ENCODE measurements at regions of chr1 and their contacts with region 1.

Region 1: GRCh38 chr1:206808615-206809014 is 36.3 kb upstream of the IL10 start:
- DNase-seq: no peak
- H3K4me3 ChIP-seq: no peak overlapping the region
- H3K27ac ChIP-seq: no peak overlapping the region
- H3K4me1 ChIP-seq: peaks cover 0 to 22% of the 10 kb centered on the region in 2 experiments; a peak in 2 of 4 replicates
- H3K27me3 ChIP-seq: peaks cover 9% of the 10 kb centered on the region; the same call in 1 of the 2 replicates
- CTCF ChIP-seq: peak; percentile 33; the same call in 1 of the 2 replicates
- EP300 ChIP-seq: no peak
- RAD21 ChIP-seq: peak; percentile 56

Region 2: GRCh38 chr1:206797534-206798383 is 10.9 kb before region 1 on chr1:
- CTCF ChIA-PET with region 1: interaction called, 10 read pairs
- POLR2A ChIA-PET with region 1: no interaction called
- DNase-seq: peak; percentile 27
- H3K4me3 ChIP-seq: no peak overlapping the region
- H3K27ac ChIP-seq: no peak overlapping the region
- H3K4me1 ChIP-seq: no peaks in the 10 kb centered on the region
- H3K27me3 ChIP-seq: 0 out of 2 replicates have a peak, but pooled peaks cover 8% of the 10 kb centered on the region
- CTCF ChIP-seq: peak; percentile 59
- EP300 ChIP-seq: no peak
- RAD21 ChIP-seq: peak; percentile 40; the same call in 1 of the 2 replicates